ENCODE measurements at regions of chrX and their contacts with region 1.

Region 1: DNA sequence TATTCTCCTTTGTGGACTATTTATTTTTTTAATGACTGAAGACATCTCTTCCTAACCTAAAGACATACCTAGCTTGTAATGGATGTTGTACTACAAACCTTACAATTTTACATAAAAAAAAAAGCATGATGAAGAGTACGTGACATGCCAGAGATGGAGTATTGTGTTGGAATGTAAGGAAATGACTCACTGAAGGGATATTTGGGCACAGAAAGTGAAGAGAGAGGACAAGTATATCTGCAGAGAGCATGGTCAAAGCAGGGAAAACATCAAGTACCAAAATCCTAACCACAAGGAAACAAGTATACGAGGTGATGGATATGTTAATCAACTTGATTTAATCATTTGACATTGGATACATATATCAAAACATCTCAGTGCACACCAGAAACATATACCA is 1051.4 kb upstream of the PRKX start:
- DNase-seq: no peak
- H3K4me3 ChIP-seq: no peak overlapping the region
- H3K27ac ChIP-seq: no peak overlapping the region
- H3K4me1 ChIP-seq: peaks cover 11% of the 10 kb centered on the region; the same call in 1 of the 2 replicates
- H3K27me3 ChIP-seq: no peaks in the 10 kb centered on the region
- CTCF ChIP-seq: no peak

Region 2: GRCh38 chrX:4825550-4825949 is 60.7 kb after region 1 on chrX:
- CTCF ChIA-PET with region 1: interaction called, 10 read pairs
- POLR2A ChIA-PET with region 1: no interaction called
- intact Hi-C with region 1: no loop called
- DNase-seq: no peak
- H3K4me3 ChIP-seq: no peak overlapping the region
- H3K27ac ChIP-seq: no peak overlapping the region
- H3K4me1 ChIP-seq: peaks cover 5% of the 10 kb centered on the region
- H3K27me3 ChIP-seq: no peaks in the 10 kb centered on the region
- CTCF ChIP-seq: no peak

Measured in PC-9 (cell line).